ENCODE measurements at regions of chr21 and their contacts with region 1.

Region 1: GRCh38 chr21:44297525-44298290 is 2.1 kb upstream of the PFKL start:
- DNase-seq: peak; percentile 86
- H3K4me3 Mint-ChIP-seq: peak overlapping the region; percentile 26
- H3K27ac Mint-ChIP-seq: peak overlapping the region; percentile 83
- H3K4me1 Mint-ChIP-seq: peaks cover 50% of the 10 kb centered on the region
- H3K27me3 Mint-ChIP-seq: peaks cover 3% of the 10 kb centered on the region

Region 2: GRCh38 chr21:44011980-44012527 is 285.7 kb before region 1 on chr21 and contains the start of gene TRAPPC10:
- CTCF ChIA-PET with region 1: no interaction called
- DNase-seq: peak; percentile 86
- H3K4me3 Mint-ChIP-seq: peak within 1 kb of the TSS; percentile 93
- H3K27ac Mint-ChIP-seq: peak within 1 kb of the TSS; percentile 97
- H3K4me1 Mint-ChIP-seq: peaks cover 47% of the 10 kb centered on the region
- H3K27me3 Mint-ChIP-seq: no peaks in the 10 kb centered on the region

Region 3: DNA sequence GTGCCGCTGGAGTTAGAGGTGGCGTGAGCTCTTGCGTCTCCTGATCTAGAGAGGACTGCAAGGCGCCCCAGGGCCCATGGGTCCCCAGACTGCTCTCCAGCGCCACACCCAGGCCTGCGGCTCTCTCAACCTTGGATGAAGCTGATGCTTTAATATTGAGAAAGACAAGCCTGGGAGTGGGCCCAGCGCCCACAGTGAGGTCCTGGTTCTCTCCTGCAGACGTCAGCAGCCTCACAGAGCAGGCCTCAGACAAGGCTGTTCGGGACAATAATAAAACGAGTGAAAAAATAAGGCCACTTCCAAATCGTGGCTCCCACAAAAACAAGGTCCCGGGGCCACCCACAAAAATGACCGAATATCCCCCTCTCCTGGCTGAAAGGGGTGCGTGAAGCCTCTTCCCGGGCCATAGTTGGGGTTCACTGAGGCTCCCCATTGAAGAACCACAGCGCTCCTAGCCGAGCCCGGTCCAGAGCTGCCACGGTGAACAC is 30.0 kb before region 1 on chr21:
- CTCF ChIA-PET with region 1: interaction called, 14 read pairs
- DNase-seq: peak; percentile 50
- H3K4me3 Mint-ChIP-seq: no peak overlapping the region
- H3K27ac Mint-ChIP-seq: no peak overlapping the region
- H3K4me1 Mint-ChIP-seq: no peaks in the 10 kb centered on the region
- H3K27me3 Mint-ChIP-seq: peaks cover 7% of the 10 kb centered on the region